Mammary epithelial cell (primary cell): ENCODE measurements at regions of chr5 and their contacts with region 1.

Region 1: GRCh38 chr5:168579488-168580226 is 489 bp upstream of the PANK3 start:
- DNase-seq: peak; percentile 99
- H3K4me3 ChIP-seq: peak overlapping the region; percentile 60 to 96 (median 95)
- H3K27ac ChIP-seq: peak overlapping the region; percentile 91
- H3K4me1 ChIP-seq: peaks cover 15% of the 10 kb centered on the region
- H3K27me3 ChIP-seq: no peaks in the 10 kb centered on the region
- CTCF ChIP-seq: no peak

Region 2: GRCh38 chr5:168651654-168652053 is 72.0 kb after region 1 on chr5:
- CTCF ChIA-PET with region 1: interaction called, 4 read pairs
- dilution Hi-C with region 1: no loop called
- in situ Hi-C with region 1: no loop called
- intact Hi-C with region 1: loop called (anchors 1 kb)
- DNase-seq: peak; percentile 82
- H3K4me3 ChIP-seq: no peak overlapping the region
- H3K27ac ChIP-seq: peak overlapping the region; percentile 38
- H3K4me1 ChIP-seq: peaks cover 49% of the 10 kb centered on the region
- H3K27me3 ChIP-seq: no peaks in the 10 kb centered on the region
- CTCF ChIP-seq: no peak

Region 3: DNA sequence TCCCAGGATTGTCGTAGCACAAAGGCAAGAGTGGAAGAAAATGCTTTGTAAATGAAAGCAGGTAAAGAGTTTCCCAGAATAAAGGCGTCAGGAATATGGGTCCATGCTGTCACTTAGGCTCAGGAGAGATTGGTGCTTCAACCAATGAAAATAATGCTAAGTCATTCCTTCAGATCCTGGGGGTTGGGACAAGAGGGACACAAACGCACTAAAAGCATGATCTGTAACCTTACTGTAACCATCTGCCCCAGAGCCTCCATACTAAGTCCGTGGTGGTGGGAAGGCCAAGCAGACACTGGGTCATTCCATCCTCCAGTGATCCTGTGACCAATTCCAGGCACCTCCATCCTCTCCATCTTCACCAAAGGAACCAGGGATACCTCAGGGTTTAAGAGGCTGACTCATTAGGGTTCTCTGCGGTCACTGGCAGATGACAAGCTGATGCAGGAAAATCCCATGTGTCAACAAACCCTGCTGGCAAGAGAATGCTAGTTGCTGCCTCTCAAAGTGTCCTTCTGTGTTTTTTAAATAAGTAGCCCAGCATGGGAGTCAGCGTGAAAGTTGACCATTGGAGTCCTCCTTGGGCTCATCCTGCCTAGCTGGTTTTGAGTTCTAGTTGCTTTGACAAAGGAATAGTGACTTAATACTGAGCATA is 520.9 kb after region 1 on chr5:
- CTCF ChIA-PET with region 1: no interaction called
- dilution Hi-C with region 1: no loop called
- in situ Hi-C with region 1: no loop called
- intact Hi-C with region 1: loop called (anchors 2 kb)
- DNase-seq: peak; percentile 94
- H3K4me3 ChIP-seq: no peak overlapping the region
- H3K27ac ChIP-seq: peak overlapping the region; percentile 7
- H3K4me1 ChIP-seq: peaks cover 34% of the 10 kb centered on the region
- H3K27me3 ChIP-seq: no peaks in the 10 kb centered on the region
- CTCF ChIP-seq: peak in 1 of 2 donors; percentile 25